Thyroid gland (tissue), 4 donors: ENCODE measurements at regions of chr11 and their contacts with region 1.

Region 1: DNA sequence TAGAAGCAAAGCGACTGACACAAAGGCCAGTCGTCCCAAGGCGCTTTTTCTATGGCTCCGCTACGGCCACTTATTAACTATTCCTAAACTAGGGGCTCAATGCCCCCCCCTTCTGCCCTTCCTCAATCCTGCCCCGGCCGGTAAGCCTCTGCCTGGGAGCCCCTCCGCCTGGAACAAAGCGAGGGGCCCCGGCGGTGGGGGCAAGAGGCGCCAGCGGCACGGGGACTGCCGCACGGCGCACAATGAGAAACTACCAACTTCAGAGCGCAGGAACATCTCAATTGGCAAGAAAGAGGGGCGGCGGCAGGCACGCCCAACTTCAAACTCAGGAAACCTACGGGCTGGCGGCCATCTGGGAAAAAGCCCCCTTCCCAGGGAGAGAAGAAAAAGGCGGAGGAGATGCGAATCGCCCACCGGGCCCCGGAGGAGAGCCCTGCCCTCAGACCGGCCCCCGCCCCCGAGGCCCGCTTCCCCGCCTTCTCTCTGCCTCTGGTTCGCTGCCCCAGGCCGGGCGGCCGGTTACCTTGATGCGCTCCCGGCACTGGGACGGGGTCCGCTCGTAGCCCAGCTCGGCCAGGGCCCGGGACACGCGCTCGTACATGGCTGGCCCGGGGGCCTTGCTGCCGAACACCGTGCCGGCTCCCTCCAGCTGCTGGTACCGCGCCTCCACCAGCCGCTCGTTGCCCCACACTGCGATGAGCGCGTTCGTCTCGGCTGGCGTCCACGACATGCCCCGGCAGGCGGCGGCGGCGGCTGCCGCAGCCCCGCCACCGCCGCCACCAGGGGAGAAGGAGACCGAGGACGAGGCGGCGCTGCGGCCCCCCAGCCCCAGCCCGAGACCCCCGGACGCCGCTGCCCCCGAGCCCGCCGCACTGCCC is 619 bp downstream of the MSANTD2 start:
- DNase-seq: peak; percentile 33 to 58
- H3K4me3 ChIP-seq: peak overlapping the region; percentile 54 to 86 (median 72)
- H3K27ac ChIP-seq: peak overlapping the region; percentile 95 to 98 (median 98)
- H3K4me1 ChIP-seq: peaks cover 27 to 33% of the 10 kb centered on the region in 2 donors
- H3K27me3 ChIP-seq: no peaks in the 10 kb centered on the region
- CTCF ChIP-seq: no peak
- POLR2A ChIP-seq: peak in 1 of 2 donors; percentile 18

Region 2: GRCh38 chr11:124739479-124740276 is 59.9 kb before region 1 on chr11 and contains the start of gene NRGN:
- intact Hi-C with region 1: loop called (anchors 10 kb)
- DNase-seq: peak; percentile 94 to 95
- H3K4me3 ChIP-seq: peak within 1 kb of the TSS; percentile 5 to 49 (median 35)
- H3K27ac ChIP-seq: no peak within 1 kb of the TSS
- H3K4me1 ChIP-seq: peaks cover 9 to 22% of the 10 kb centered on the region in 2 donors
- H3K27me3 ChIP-seq: no peaks in the 10 kb centered on the region
- CTCF ChIP-seq: no peak
- POLR2A ChIP-seq: peak in 1 of 2 donors; percentile 50
- total RNA-seq, gene NRGN: 0.40 to 3.6 (median 2.7) TPM

Region 3: DNA sequence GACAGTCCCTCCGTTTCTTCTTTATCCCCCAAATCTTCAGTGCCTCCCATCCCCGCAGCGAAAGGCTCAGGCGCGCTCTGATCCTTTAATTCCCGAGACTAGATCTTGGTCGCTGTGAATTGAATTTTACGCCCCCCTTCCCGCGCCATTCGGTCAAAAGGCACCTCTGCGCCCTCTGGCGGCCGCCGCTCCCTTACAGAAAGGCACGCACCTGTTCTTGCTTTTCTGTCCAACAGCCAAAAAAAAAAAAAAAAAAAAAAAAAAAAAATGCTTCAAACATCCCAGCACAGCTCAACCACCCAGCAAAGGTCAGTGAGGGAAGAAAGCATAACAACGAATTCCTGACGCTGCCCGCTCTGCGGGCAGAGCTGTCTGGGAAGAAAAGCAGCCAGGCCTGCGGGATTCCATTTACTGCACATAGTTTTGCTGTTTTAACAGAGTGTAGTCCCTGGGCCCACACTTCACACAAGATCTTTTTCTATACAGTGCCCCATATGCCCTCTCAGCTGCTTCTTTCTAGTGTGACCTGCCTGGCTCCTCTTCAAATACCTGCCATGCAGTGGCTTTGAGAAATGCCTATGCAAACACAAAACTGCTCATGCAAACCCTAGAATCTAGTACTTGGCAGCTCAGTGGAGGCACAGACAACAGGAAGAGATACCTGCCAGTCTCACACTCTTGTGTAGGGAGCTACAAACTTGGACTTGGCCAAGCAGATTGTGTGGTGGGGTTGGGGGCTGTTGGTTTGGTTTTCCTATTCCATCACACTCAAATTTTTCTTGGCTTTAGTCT is 36.2 kb before region 1 on chr11:
- intact Hi-C with region 1: loop called (anchors 5 kb)
- DNase-seq: peak; percentile 95 to 98
- H3K4me3 ChIP-seq: peak overlapping the region; percentile 30 to 93 (median 65)
- H3K27ac ChIP-seq: peak overlapping the region; percentile 89 to 98 (median 94)
- H3K4me1 ChIP-seq: peaks cover 28 to 51% of the 10 kb centered on the region in 2 donors
- H3K27me3 ChIP-seq: no peaks in the 10 kb centered on the region
- CTCF ChIP-seq: peak; percentile 57 to 88 (median 74)
- POLR2A ChIP-seq: peak in 1 of 2 donors; percentile 29

Region 4: GRCh38 chr11:124842305-124842704 is 42.7 kb after region 1 on chr11:
- intact Hi-C with region 1: no loop called
- DNase-seq: peak; percentile 49 to 52
- H3K4me3 ChIP-seq: no peak overlapping the region
- H3K27ac ChIP-seq: no peak overlapping the region
- H3K4me1 ChIP-seq: peaks cover 12 to 25% of the 10 kb centered on the region in 2 donors
- H3K27me3 ChIP-seq: peaks cover 10% of the 10 kb centered on the region
- CTCF ChIP-seq: no peak
- POLR2A ChIP-seq: no peak